ENCODE measurements at regions of chr2 and their contacts with region 1.

Region 1: DNA sequence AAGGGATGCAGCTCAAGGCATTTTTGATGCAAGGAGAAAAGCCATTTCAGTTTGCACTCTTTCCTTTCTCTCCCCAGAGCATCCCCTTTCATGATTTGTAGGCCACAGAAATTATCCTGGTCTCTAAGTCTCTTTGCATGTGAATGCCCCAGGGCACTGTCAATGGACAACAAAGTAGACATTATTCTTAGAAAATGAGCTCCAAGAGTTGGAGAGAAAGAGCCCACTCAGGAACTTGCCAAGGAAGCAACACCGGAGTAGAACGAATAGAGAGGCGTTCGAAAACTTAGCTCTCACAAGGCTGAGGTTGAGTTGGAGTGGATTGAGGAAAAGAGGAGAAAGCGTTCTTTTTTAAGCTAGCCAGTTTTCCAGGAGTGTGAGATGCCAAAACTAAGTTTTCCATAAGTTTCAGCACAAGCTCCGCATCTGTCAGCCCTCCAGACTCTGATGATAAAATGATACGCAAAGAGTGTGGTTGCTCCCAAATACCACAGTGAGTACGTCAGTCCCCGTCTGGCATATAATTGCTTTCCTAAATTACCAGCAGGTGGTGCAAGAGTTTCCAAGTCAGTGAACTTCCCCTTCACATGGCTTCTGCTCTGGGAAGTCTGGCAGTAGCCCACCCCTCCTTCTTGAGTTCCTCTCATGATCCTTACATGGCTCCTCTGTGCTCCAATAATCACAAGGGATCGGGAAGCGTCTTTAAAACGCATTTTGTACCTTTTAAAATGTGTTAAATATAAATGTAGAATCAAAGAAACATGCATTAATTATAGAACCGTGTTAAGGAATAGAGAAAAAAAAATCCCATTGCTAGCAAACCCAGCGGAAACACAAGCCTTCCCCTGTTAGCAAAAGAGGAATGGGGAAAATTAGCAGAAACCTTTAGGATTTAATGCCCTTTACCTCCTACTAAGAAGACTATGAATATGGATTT is 1060.6 kb upstream of the FANCL start:
- DNase-seq: peak; percentile 2
- H3K4me3 Mint-ChIP-seq: no peak overlapping the region
- H3K27ac Mint-ChIP-seq: no peak overlapping the region
- H3K4me1 Mint-ChIP-seq: no peaks in the 10 kb centered on the region
- H3K27me3 Mint-ChIP-seq: peaks cover 2% of the 10 kb centered on the region

Region 2: GRCh38 chr2:60152226-60152833 is 850.6 kb after region 1 on chr2:
- intact Hi-C with region 1: loop called (anchors 5 kb)
- DNase-seq: no peak
- H3K4me3 Mint-ChIP-seq: no peak overlapping the region
- H3K27ac Mint-ChIP-seq: no peak overlapping the region
- H3K4me1 Mint-ChIP-seq: no peaks in the 10 kb centered on the region
- H3K27me3 Mint-ChIP-seq: peaks cover 6% of the 10 kb centered on the region